Activated CD4-positive, alpha-beta T cell treated with anti-CD3 and anti-CD28 coated beads, Interleukin-2, amount 10 ng/mL, durations not matched to agents 24 days and 14 days (primary cell): ENCODE measurements at regions of chr10 and their contacts with region 1.

Region 1: DNA sequence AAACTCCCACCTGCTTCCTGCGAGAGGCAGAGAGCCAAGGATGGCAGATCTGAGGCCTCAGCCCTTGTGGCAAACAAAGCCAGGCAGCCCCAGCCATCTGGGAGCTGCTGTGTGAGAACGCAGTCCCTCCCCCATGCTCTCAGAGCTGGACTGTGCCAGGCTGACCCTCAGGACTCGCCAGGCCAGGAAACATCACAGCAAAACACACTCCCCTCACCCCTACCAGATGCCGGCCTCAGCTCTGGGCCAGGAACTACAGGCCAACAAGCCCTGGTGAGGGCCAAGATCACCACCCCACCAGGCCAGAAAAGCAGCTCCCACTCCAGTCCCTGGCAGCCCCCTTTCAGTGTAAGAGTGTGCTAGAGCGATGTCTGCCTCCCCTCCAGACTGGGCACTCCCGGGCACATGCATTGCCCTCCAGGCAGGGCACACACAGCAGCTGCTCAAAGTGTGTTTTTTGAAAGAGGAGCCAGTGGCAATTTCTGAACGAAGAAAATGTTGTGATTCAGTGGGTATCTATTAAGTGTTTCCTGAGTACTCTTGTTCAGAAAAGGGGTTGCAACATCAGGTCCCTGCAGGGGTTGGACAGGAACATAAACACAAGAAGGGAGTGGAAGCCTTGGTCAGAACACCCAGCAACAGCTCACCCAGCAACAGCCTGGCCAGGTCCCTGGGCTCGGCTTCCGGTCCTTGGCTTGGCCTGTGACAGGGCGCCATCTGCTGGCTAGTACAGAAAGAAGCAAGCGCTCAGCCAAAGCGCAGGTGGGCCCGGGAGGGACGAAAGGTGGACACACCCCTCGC is 18.3 kb downstream of the LRRC20 start:
- DNase-seq: peak; percentile 95
- H3K4me3 Mint-ChIP-seq: peak overlapping the region; percentile 11
- H3K27ac Mint-ChIP-seq: no peak overlapping the region
- H3K4me1 Mint-ChIP-seq: peaks cover 7% of the 10 kb centered on the region
- H3K27me3 Mint-ChIP-seq: no peaks in the 10 kb centered on the region

Region 2: DNA sequence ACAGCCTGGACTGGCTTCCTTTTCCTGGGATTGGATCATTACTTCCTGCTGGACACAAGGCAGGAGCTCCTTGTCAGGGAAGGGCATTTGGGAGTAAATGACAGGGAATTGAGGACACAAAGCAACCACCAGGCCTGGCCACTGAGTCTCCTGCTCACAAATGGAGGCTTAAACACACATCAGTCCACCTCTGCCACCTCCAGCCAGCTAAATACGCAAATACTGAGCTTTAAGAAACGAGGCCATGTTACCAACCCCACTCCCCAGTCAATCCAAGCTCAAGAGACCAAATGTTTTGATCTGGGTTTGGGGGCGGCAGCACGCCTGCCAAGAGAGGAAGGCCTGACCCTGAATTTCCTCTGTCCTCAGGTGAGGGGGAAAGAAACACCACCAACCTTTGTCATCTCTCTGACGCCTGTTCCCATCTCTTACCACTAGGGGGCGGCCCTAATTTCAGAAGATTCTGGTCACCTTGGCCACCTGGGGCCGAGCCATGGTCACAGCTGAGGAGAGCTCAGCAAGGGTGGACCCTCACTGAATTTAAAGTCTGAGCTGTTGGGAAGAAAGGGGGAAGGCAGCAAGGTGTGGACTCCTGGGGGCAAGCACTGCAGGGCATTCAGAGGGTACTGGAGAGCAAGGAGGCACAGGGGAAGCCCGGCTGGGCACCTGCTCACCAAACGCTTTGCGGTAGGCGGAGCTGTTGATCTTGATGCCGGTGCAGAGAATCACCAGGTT is 248.1 kb before region 1 on chr10:
- intact Hi-C with region 1: loop called (anchors 5 kb)
- DNase-seq: peak; percentile 88
- H3K4me3 Mint-ChIP-seq: no peak overlapping the region
- H3K27ac Mint-ChIP-seq: no peak overlapping the region
- H3K4me1 Mint-ChIP-seq: peaks cover 6% of the 10 kb centered on the region
- H3K27me3 Mint-ChIP-seq: no peaks in the 10 kb centered on the region

Region 3: GRCh38 chr10:70221030-70221429 is 143.1 kb before region 1 on chr10:
- intact Hi-C with region 1: loop called (anchors 1 kb)
- DNase-seq: no peak
- H3K4me3 Mint-ChIP-seq: peak overlapping the region; percentile 69
- H3K27ac Mint-ChIP-seq: no peak overlapping the region
- H3K4me1 Mint-ChIP-seq: peaks cover 23% of the 10 kb centered on the region
- H3K27me3 Mint-ChIP-seq: no peaks in the 10 kb centered on the region

Region 4: GRCh38 chr10:70272925-70273316 is 91.2 kb before region 1 on chr10:
- intact Hi-C with region 1: loop called (anchors 5 kb)
- DNase-seq: peak; percentile 66
- H3K4me3 Mint-ChIP-seq: no peak overlapping the region
- H3K27ac Mint-ChIP-seq: peak overlapping the region; percentile 45
- H3K4me1 Mint-ChIP-seq: peaks cover 21% of the 10 kb centered on the region
- H3K27me3 Mint-ChIP-seq: peaks cover under 1% of the 10 kb centered on the region